SK-N-SH (cell line): ENCODE measurements at regions of chr7 and their contacts with region 1.

Region 1: DNA sequence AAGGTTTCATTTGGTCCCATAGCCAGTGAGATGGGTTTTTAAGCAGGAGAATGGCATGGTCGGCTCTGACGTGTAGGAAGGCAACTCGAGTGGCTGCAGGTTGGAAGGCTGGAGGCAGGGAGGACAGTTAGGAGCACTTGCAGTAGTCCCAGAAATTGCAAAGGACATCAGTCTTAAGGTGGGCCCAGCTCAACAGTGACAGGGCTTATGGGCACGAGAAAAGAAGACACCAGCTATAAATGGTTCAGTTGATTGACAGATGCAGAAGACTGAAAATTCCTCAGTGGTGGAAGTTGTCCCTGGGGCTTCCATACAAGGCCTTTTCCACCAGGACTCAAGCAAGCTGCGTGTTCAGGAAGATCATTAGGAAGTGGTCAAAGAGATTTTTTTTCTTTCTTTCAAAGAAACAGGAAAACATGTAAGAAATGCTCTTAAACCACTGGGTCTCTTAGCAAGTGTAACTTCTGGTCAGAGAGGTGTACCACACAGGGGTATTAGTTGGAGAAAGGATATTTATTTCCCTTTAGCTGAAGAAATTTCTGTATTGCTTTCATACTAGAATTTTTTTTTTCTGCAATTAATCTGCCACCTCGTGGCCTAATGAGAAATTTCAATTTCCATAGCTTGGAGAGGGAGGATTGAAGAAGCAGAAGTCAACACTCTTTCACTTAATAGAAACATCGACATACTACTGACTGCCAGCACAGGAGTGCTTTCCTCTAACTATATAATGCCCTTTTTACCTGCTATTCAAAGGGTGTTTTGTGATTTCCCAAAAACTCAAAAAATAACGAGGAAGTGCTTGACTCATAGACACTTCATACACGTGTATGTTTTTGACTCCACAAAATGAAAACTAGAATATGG is 177.4 kb upstream of the NAMPT start:
- DNase-seq: peak; percentile 12
- H3K4me3 ChIP-seq: no peak overlapping the region
- H3K27ac ChIP-seq: no peak overlapping the region
- H3K4me1 ChIP-seq: peaks cover 0 to 4% of the 10 kb centered on the region in 2 experiments; a peak in 1 of 4 replicates
- H3K27me3 ChIP-seq: no peaks in the 10 kb centered on the region
- CTCF ChIP-seq: peak; percentile 79
- EP300 ChIP-seq: no peak
- RAD21 ChIP-seq: peak; percentile 83

Region 2: GRCh38 chr7:106448992-106449859 is 13.0 kb before region 1 on chr7:
- CTCF ChIA-PET with region 1: interaction called, 14 read pairs
- POLR2A ChIA-PET with region 1: no interaction called
- DNase-seq: no peak
- H3K4me3 ChIP-seq: no peak overlapping the region
- H3K27ac ChIP-seq: no peak overlapping the region
- H3K4me1 ChIP-seq: no peaks in the 10 kb centered on the region
- H3K27me3 ChIP-seq: no peaks in the 10 kb centered on the region
- CTCF ChIP-seq: no peak
- EP300 ChIP-seq: no peak
- RAD21 ChIP-seq: no peak

Region 3: GRCh38 chr7:106480161-106480579 is 17.9 kb after region 1 on chr7:
- CTCF ChIA-PET with region 1: interaction called, 26 read pairs
- POLR2A ChIA-PET with region 1: no interaction called
- DNase-seq: no peak
- H3K4me3 ChIP-seq: no peak overlapping the region
- H3K27ac ChIP-seq: no peak overlapping the region
- H3K4me1 ChIP-seq: peaks cover 0 to 6% of the 10 kb centered on the region in 2 experiments
- H3K27me3 ChIP-seq: no peaks in the 10 kb centered on the region
- CTCF ChIP-seq: no peak
- EP300 ChIP-seq: no peak
- RAD21 ChIP-seq: no peak

Region 4: GRCh38 chr7:106568680-106569499 is 106.7 kb after region 1 on chr7:
- CTCF ChIA-PET with region 1: no interaction called
- POLR2A ChIA-PET with region 1: no interaction called
- DNase-seq: peak; percentile 80
- H3K4me3 ChIP-seq: no peak overlapping the region; a peak in 1 of 4 replicates
- H3K27ac ChIP-seq: peak overlapping the region in 1 of 2 experiments; percentile 98; a peak in 2 of 4 replicates
- H3K4me1 ChIP-seq: peaks cover 10 to 37% of the 10 kb centered on the region in 2 experiments; a peak in 3 of 4 replicates
- H3K27me3 ChIP-seq: no peaks in the 10 kb centered on the region
- CTCF ChIP-seq: no peak
- EP300 ChIP-seq: peak; percentile 7 to 94; a peak in 2 of 4 replicates
- RAD21 ChIP-seq: peak; percentile 49

Region 5: GRCh38 chr7:106870983-106871410 is 408.8 kb after region 1 on chr7:
- CTCF ChIA-PET with region 1: no interaction called
- POLR2A ChIA-PET with region 1: no interaction called
- DNase-seq: no peak
- H3K4me3 ChIP-seq: no peak overlapping the region
- H3K27ac ChIP-seq: no peak overlapping the region
- H3K4me1 ChIP-seq: no peaks in the 10 kb centered on the region
- H3K27me3 ChIP-seq: no peaks in the 10 kb centered on the region
- CTCF ChIP-seq: no peak
- EP300 ChIP-seq: no peak
- RAD21 ChIP-seq: no peak